GM12878 (cell line): ENCODE measurements at regions of chr5 and their contacts with region 1.

Region 1: DNA sequence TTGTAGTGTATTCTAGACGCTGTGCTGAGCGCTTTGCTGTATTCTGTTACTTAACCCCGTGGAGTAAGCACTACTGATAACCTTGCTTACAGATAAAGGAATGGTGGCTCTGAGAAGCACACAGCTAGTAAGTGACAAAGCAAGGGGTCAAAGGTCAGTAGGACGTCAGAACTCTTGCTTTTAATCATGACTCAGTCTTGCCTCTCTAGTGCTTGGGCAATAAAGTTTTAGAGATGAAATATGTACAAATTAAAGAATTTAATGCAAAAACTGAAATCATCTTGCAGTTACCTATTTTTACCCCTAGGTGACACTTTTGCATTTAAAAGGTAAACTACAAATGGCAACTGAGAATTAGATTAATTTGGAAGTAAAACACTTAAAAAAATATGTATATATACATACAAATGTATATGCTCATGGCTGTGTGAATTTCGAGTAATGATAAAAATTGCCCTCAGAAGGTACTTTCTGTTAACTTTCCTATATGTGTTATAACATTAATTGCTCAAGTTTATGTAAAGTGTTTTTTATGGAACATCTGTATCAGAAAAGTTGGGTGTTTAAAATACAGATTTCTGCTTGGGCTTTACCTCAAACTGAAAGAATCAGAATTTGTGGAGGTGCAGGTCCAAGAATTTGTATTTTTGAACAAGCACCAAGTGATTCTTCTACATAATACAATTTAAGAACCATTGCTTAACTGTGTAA is 175.1 kb upstream of the DAB2 start:
- DNase-seq: no peak
- ATAC-seq: no peak
- H3K4me3 ChIP-seq: no peak overlapping the region
- H3K27ac ChIP-seq: no peak overlapping the region
- H3K4me1 ChIP-seq: no peaks in the 10 kb centered on the region
- H3K27me3 ChIP-seq: peaks cover 0 to 2% of the 10 kb centered on the region in 2 experiments; a peak in 1 of 4 replicates
- CTCF ChIP-seq: peak; percentile 24 to 49 (median 48); a peak in 3 of 6 replicates
- EP300 ChIP-seq: no peak
- POLR2A ChIP-seq: no peak
- RAD21 ChIP-seq: peak; percentile 49

Region 2: GRCh38 chr5:39691993-39692392 is 92.1 kb after region 1 on chr5:
- CTCF ChIA-PET with region 1: interaction called, 3 read pairs
- POLR2A ChIA-PET with region 1: no interaction called
- RAD21 ChIA-PET with region 1: no interaction called
- SMC1A ChIA-PET with region 1: no interaction called
- in situ Hi-C with region 1: no loop called
- intact Hi-C with region 1: loop called (anchors 5 kb)
- DNase-seq: no peak
- ATAC-seq: peak; percentile 61
- H3K4me3 ChIP-seq: no peak overlapping the region
- H3K27ac ChIP-seq: no peak overlapping the region
- H3K4me1 ChIP-seq: no peaks in the 10 kb centered on the region
- H3K27me3 ChIP-seq: no peaks in the 10 kb centered on the region
- CTCF ChIP-seq: peak in 1 of 3 experiments; percentile 14; a peak in 1 of 6 replicates
- EP300 ChIP-seq: no peak
- POLR2A ChIP-seq: no peak
- RAD21 ChIP-seq: peak; percentile 28